Activated CD8-positive, alpha-beta T cell treated with anti-CD3 and anti-CD28 coated beads for 36 hours (primary cell): ENCODE measurements at regions of chr20 and their contacts with region 1.

Region 1: DNA sequence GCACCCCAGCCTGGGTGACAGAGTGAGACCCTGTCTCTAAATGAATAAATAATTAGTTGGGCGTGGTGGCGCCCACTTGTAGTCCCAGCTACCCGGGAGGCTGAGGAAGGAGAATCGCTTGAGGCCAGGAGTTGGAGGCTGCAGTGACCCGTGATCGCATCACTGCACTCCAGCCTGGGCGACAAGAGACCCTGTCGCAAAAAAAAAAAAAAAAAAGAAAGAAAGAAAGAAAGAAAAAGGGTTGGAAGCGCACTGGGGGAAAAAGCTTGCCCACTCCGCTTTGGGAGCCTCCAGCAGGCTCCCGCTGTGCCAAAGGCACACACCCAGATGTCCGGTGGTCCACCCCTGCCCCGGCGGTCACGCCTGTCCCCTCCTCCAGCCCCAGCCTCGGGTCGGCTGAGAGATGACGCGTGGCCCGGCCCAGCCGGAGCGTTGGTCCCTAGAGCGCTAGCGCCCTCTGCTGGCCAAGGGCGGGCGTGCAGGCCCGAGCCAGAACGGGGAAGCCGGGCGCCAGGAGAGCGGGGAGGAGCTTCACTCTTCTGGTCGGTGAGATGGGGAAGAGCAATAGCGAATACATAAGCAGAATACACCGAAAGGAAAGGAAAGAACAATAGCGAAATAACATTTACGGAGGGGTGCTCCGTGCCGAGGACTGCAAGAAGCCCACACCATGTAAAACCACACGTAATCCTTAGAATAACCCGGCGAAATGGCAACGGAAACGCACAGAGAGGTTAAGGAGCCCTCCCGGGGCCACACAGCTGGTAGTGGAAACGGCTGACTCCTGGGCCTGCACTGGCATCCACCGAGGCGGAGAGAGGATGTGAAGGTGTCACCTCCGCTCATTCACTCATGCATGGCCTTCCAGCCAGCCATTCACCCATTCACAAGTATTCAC is 41.7 kb downstream of the UBE2V1 start:
- DNase-seq: peak; percentile 93
- ATAC-seq: peak; percentile 99
- H3K4me3 Mint-ChIP-seq: peak overlapping the region; percentile 61
- H3K27ac Mint-ChIP-seq: no peak overlapping the region
- H3K4me1 Mint-ChIP-seq: no peaks in the 10 kb centered on the region
- H3K27me3 Mint-ChIP-seq: no peaks in the 10 kb centered on the region
- CTCF ChIP-seq: peak; percentile 100

Region 2: DNA sequence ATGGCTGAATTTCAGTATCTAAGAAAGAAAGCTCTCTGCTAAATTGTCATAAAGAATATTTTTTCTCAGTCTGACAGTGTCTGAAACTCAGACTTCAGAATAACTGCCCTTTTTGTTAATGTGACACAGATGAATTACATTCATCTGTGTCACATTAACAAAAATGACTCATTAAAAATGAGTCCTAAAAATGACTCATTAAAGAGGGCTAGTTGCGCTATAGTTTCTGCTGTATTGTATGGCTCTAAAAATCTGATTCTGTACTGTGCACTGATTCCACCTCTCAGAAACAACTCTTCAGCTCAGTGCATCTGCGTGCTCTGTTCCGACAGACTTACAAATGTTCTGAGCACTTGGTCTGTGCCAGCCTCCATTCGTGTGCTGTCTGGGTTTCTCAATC is 120.1 kb before region 1 on chr20:
- CTCF ChIA-PET with region 1: interaction called, 17 read pairs
- POLR2A ChIA-PET with region 1: no interaction called
- intact Hi-C with region 1: no loop called
- DNase-seq: no peak
- ATAC-seq: peak; percentile 80
- H3K4me3 Mint-ChIP-seq: no peak overlapping the region
- H3K27ac Mint-ChIP-seq: peak overlapping the region; percentile 61
- H3K4me1 Mint-ChIP-seq: peaks cover 8% of the 10 kb centered on the region
- H3K27me3 Mint-ChIP-seq: no peaks in the 10 kb centered on the region
- CTCF ChIP-seq: no peak

Region 3: GRCh38 chr20:49982346-49983122 is 88.7 kb before region 1 on chr20 and contains the start of gene SNAI1:
- CTCF ChIA-PET with region 1: interaction called, 364 read pairs
- POLR2A ChIA-PET with region 1: interaction called, 14 read pairs
- intact Hi-C with region 1: loop called (anchors 2 kb)
- DNase-seq: peak; percentile 81
- ATAC-seq: peak; percentile 89
- H3K4me3 Mint-ChIP-seq: peak within 1 kb of the TSS; percentile 65
- H3K27ac Mint-ChIP-seq: peak within 1 kb of the TSS; percentile 66
- H3K4me1 Mint-ChIP-seq: peaks cover 30% of the 10 kb centered on the region
- H3K27me3 Mint-ChIP-seq: peaks cover 3% of the 10 kb centered on the region
- CTCF ChIP-seq: peak; percentile 74
- total RNA-seq, gene SNAI1: 0.90 to 1.4 TPM

Region 4: DNA sequence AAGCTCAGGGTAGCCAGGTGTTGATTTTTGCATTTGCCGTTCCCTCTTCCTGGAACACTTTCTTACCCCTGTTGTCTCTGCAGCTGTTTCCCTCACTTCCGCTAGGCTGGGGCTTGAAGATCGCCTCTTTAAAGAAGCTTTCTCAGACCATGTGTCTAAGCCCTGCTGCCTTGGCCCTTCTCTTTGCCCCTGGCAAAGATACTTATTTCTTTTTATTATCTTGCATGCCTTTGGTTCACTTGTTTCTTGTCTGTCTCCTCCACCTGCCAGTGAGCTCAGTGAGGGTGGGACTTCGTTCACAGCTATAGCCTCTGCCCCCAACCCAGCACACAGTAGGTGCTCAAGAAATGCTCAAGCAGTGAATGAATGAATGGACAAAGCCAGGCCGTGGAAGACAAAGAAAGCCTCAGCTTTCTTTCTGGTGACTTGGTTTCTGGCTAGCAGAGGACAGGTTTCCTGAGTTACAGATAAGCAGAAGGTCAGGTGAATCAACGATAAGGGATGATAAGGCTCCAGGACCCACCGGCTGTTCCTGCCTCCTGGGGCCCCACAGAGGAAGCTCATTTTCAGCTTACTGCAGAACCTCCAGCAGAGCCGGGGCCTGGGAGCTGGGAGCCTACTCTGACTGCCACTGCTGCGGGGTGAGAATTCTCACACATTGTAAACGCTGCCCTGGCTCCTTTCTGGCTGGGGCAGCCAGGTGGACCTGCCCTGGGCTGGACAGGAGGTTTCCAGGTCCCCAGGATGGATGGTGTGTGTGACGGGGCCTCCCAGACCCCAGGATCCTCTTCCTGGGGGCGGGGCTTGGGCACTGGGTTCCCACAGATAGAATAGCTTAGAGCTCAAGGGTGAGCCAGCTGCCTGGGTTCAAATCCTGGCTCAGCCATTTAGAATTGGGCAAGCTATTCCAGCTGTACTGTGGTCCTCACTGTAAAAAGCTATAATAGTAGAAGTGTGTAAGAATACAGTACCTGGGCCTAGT is 58.7 kb before region 1 on chr20:
- CTCF ChIA-PET with region 1: interaction called, 23 read pairs
- POLR2A ChIA-PET with region 1: no interaction called
- intact Hi-C with region 1: no loop called
- DNase-seq: peak; percentile 23
- ATAC-seq: peak; percentile 53
- H3K4me3 Mint-ChIP-seq: no peak overlapping the region
- H3K27ac Mint-ChIP-seq: no peak overlapping the region
- H3K4me1 Mint-ChIP-seq: peaks cover 9% of the 10 kb centered on the region
- H3K27me3 Mint-ChIP-seq: peaks cover 17% of the 10 kb centered on the region
- CTCF ChIP-seq: no peak

Region 5: GRCh38 chr20:50085452-50086365 is 14.5 kb after region 1 on chr20:
- CTCF ChIA-PET with region 1: interaction called, 60 read pairs
- POLR2A ChIA-PET with region 1: interaction called, 5 read pairs
- intact Hi-C with region 1: no loop called
- DNase-seq: peak; percentile 49
- ATAC-seq: peak; percentile 86
- H3K4me3 Mint-ChIP-seq: peak overlapping the region; percentile 9
- H3K27ac Mint-ChIP-seq: peak overlapping the region; percentile 52
- H3K4me1 Mint-ChIP-seq: peaks cover 29% of the 10 kb centered on the region
- H3K27me3 Mint-ChIP-seq: no peaks in the 10 kb centered on the region
- CTCF ChIP-seq: peak; percentile 77

Region 6: GRCh38 chr20:50110141-50110925 is 39.1 kb after region 1 on chr20:
- CTCF ChIA-PET with region 1: interaction called, 30 read pairs
- POLR2A ChIA-PET with region 1: no interaction called
- intact Hi-C with region 1: no loop called
- DNase-seq: peak; percentile 84
- ATAC-seq: peak; percentile 50
- H3K4me3 Mint-ChIP-seq: peak overlapping the region; percentile 94
- H3K27ac Mint-ChIP-seq: peak overlapping the region; percentile 95
- H3K4me1 Mint-ChIP-seq: peaks cover 80% of the 10 kb centered on the region
- H3K27me3 Mint-ChIP-seq: no peaks in the 10 kb centered on the region
- CTCF ChIP-seq: no peak

Region 7: DNA sequence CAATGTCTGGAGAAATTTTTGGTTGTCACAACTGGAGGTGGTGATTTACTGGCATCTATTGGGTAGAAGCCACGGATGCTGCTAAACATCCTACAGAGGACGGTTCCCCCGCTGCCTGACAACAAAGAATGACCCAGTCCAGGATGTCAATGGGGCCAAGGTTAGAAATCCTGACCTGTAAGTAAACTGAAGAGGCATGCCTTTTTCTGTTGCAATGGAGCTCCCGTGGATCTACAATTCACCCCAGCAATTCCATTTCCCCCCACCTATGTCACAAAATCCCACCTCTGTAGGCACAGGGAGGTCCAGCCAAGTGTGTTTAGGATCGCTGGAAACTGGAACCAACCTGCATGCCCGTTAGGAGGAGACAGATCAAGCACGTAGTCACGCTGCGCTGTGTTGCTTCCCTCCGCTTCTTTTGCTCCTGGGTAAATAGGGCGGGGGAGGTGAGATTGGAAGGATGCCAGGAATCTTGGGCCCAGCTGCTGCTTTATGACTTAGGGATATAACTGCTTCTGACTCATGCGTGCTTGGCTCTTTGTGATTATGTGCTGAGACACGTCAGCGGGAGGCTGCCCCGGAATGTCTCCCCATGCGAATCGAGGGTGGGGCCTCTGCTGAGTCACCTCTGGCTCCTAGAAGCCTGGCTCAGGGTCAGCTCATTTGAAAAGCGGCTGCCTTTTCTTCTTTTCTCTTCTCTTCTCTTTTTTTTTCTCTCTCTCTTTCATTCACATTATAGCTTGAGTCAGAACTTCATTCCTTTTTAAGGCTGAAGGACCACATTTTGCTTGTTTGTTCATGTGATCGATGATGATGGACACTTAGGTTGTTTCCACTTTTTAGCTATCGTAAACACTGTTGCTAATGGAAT is 94.7 kb after region 1 on chr20:
- CTCF ChIA-PET with region 1: interaction called, 33 read pairs
- POLR2A ChIA-PET with region 1: no interaction called
- intact Hi-C with region 1: no loop called
- DNase-seq: peak; percentile 95
- ATAC-seq: peak; percentile 98
- H3K4me3 Mint-ChIP-seq: peak overlapping the region; percentile 55
- H3K27ac Mint-ChIP-seq: peak overlapping the region; percentile 56
- H3K4me1 Mint-ChIP-seq: peaks cover 12% of the 10 kb centered on the region
- H3K27me3 Mint-ChIP-seq: peaks cover 4% of the 10 kb centered on the region
- CTCF ChIP-seq: no peak

Region 8: DNA sequence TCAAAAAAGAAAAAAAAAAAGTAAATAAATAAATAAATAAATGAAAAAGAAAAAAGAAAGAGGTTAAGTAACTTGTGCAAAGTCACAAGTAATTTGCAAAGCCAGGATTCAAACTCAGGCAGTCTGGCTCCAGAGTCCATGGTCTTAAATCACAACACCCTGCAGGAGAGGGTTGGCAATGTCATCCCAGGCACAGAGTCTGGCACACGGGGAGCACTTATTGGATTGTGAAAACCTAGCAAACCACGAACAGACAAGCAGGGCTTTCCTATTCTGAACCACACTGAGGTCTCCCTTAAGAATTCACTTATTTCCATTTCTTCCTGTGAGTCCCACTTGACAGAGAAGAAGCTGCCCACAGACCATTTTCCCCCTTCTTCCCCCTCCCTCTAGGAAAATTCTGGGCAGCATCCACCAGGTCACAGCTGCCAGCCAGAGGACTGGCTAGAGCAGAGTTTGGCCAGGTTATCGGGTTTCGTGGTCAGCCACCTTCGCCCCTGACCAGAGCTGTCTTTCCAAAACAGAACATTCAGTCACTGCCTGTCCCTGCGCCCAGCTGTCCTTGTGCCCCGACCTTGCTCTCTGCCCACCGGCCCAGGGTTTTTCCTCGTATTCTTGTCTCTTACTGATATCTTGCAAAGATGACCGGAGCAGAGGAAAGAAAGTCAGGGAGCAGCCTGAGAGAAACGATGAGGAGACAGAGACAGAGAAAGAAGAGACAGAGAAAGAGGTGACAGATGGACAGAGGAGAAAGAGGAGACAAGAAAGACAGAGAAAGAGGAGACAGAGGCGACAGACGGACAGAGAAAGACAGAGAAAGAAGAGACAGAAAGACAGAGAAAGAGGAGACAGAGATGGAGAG is 332.6 kb after region 1 on chr20:
- CTCF ChIA-PET with region 1: no interaction called
- POLR2A ChIA-PET with region 1: no interaction called
- intact Hi-C with region 1: no loop called
- DNase-seq: no peak
- ATAC-seq: no peak
- H3K4me3 Mint-ChIP-seq: no peak overlapping the region
- H3K27ac Mint-ChIP-seq: no peak overlapping the region
- H3K4me1 Mint-ChIP-seq: no peaks in the 10 kb centered on the region
- H3K27me3 Mint-ChIP-seq: peaks cover 2% of the 10 kb centered on the region
- CTCF ChIP-seq: no peak